GM10248 (cell line): ENCODE measurements at regions of chr12 and their contacts with region 1.

Region 1: GRCh38 chr12:27199638-27200300 is 44.3 kb upstream of the STK38L start:
- DNase-seq: no peak
- CTCF ChIP-seq: no peak

Region 2: DNA sequence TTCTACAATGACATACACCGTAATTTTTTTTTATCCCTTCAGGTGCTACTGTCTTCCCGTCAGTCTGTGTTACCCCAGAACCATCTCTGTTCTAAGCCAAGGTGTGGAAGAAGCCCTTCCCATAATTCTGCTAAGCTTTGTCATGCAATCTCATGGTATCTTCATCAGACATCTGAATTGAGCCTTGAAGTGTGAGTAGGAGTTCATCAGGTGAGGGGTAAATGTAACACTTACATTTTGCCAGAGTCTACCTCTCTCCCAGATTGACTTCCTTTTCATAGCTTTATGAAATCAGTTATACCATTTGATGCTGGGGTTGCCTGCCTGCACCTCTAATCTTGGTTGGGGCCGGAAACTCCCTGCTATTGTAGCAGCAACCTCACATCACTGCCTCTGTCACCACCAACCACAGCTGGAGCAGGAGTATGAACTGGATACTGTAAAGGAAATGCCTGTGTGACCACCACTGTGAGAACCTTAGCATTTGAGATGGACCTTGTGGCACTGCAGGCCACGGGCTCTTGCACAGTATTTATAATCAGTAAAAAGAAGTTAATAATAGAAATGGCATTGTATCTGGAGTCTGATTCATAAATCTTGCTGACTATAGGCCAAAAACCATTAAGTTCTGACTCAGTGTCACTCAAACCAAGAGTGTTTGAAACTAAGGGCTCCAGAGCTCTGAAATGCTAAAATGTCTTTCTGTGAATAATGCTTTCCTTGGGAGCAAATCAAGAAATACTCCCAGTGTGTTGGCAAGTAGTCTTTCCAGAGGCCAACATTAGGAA is 14.3 kb before region 1 on chr12:
- CTCF ChIA-PET with region 1: interaction called, 26 read pairs
- POLR2A ChIA-PET with region 1: no interaction called
- DNase-seq: no peak
- CTCF ChIP-seq: no peak

Region 3: DNA sequence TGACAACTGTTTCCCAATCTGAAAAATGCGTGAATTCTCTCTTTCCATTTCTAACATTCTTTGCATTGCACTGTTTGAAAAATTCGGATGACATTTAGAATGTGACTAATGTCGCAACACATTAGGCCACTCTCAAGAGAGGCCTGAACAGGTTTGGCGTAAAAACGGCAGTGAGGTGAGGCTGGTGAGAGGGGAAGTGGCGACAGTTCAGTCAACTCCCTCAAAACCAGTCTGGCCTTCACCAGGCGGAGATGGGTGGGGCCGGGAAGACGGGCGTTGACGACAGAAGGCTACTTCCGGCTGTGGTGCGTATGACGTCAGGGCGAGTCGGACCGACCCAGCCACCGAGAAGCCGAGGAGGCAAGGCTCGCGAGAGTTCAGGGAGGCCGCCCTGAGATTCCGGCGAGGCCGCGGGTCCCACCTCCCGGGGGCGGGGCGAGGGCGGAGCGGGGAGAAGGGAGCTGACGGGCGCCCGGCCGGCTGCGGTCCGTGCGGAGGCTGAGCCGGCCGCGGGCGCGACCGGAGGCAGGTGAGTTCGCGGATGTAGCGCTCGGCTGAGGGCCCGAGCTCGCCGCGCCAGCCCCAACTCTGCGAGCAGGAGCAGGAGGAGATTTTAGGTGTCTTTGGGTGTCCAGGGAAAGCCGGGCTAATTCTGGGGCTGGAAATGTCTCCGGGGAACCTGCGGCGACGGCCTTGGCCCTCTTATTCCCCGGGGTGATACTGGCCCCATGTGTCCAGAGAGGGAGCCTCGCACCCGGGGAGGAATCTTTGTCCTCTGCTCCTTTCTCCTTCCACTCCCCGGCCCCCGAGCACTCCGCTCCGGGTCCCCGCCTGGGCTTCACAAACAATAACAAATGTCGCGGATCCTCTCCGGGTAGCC is 44.3 kb after region 1 on chr12 and contains the start of gene STK38L:
- CTCF ChIA-PET with region 1: no interaction called
- POLR2A ChIA-PET with region 1: no interaction called
- DNase-seq: peak; percentile 95
- CTCF ChIP-seq: peak; percentile 18